Lower leg skin (tissue), 4 donors: ENCODE measurements at regions of chr12 and their contacts with region 1.

Region 1: DNA sequence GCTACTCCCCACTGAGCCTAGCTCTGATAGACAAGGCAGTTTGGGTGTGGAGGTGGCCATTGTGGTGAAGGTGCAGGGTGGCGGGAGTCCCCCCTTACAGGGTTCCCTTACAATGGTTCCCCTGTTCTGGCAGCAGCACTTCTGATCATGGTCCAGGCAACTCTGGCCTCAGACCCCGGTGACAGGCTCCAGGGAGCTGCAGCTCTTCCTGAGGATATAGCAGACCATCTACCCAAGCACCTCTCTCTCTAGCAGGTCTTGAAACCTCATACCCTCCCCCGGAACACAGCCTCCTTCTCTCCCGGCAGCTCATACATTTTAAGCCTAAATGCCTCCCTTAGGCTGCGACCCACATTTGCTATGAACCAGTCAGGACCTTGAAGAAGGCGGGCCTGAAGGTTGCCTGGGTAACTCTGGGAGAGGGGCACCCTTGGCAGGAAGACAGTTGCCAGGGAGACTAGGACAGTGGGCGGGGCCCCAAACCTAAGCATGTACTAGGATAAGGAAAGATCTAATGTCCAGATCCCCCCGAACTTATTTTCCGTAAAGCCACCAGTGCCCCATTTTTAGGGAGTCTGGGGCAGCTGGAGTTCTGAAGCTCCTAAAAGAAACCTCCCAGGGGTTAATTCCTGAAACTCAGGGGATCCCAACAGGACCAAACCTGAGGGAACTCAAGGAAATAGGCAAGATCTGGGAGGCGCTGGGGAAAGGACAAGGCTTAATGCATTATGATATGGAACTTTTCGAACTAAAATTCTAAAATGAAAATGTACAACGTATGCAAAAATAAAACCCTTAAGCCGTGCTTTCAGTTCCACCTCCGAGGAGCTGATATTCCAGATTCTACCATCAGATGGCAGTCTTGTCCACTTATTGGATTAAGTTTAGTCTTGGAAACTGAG is 4.5 kb upstream of the GDF11 start:
- DNase-seq: peak; percentile 90 to 94
- H3K4me3 ChIP-seq: peak overlapping the region; percentile 19
- CTCF ChIP-seq: peak in 1 of 3 donors; percentile 86
- POLR2A ChIP-seq: no peak

Region 2: GRCh38 chr12:55940065-55940732 is 201.8 kb after region 1 on chr12:
- intact Hi-C with region 1: loop called (anchors 5 kb)
- DNase-seq: peak; percentile 85 to 97
- H3K4me3 ChIP-seq: no peak overlapping the region
- CTCF ChIP-seq: peak in 1 of 3 donors; percentile 84
- POLR2A ChIP-seq: no peak

Region 3: GRCh38 chr12:56521590-56522371 is 783.4 kb after region 1 on chr12 and contains the start of gene RBMS2:
- intact Hi-C with region 1: no loop called
- DNase-seq: peak; percentile 84 to 94
- H3K4me3 ChIP-seq: peak within 1 kb of the TSS; percentile 35
- CTCF ChIP-seq: no peak
- POLR2A ChIP-seq: no peak
- total RNA-seq, gene RBMS2: 12.7 to 14.9 (median 13.7) TPM